ENCODE measurements at regions of chr15 and their contacts with region 1.

Region 1: DNA sequence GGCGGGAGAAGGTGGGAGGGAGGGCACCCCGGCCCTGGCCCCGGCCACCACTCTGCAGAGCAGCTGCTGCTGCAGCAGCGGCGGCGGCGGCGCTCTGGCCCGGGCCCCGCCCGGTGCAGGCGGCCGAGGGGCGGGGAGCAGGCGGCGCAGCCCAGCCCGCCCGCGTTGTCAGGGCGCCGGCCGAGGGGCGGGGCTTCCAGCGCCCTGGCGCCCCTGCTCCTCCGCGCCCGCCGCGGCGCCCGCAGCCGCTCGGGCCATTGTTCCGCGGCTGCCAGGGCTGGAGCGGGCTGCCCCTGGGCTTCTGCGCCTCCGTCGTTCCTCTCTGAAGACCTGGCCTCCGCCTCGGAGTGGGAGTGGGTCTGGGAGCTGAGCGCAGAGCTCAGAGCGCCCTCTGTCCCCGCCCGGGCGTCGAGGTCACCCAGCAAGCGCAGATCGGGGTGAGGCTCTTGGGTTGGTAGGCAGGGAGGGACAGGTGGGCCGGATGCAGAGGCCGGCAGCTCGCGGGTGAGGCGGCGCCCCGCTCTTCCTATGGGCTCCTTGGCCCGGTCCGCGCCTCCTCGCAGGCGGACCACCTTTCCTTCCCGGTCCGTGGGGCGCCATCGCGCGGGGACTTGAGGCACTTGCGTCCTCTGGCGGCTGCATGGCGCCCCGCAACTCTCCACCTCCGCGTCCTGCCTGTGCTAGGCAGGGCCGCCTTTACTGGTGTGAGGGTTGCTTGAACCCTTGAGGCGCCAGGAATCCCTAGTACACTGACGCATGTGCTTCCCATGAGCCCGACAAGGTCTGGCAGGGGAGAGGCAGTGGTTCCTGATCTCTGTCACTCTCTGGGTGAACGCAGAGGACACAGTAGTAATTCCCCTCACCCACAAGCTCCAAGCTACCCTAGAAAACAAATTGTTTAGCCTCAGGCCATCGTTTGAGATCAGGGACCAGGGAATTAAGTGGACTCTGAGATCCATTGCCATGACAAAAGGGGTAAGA is at the start of gene LPCAT4:
- DNase-seq: peak; percentile 95
- ATAC-seq: peak; percentile 90
- H3K4me3 Mint-ChIP-seq: peak within 1 kb of the TSS; percentile 95
- H3K27ac Mint-ChIP-seq: peak within 1 kb of the TSS; percentile 98
- H3K4me1 Mint-ChIP-seq: peaks cover 38% of the 10 kb centered on the region
- H3K27me3 Mint-ChIP-seq: no peaks in the 10 kb centered on the region
- total RNA-seq, gene LPCAT4: 106 to 115 TPM

Region 2: DNA sequence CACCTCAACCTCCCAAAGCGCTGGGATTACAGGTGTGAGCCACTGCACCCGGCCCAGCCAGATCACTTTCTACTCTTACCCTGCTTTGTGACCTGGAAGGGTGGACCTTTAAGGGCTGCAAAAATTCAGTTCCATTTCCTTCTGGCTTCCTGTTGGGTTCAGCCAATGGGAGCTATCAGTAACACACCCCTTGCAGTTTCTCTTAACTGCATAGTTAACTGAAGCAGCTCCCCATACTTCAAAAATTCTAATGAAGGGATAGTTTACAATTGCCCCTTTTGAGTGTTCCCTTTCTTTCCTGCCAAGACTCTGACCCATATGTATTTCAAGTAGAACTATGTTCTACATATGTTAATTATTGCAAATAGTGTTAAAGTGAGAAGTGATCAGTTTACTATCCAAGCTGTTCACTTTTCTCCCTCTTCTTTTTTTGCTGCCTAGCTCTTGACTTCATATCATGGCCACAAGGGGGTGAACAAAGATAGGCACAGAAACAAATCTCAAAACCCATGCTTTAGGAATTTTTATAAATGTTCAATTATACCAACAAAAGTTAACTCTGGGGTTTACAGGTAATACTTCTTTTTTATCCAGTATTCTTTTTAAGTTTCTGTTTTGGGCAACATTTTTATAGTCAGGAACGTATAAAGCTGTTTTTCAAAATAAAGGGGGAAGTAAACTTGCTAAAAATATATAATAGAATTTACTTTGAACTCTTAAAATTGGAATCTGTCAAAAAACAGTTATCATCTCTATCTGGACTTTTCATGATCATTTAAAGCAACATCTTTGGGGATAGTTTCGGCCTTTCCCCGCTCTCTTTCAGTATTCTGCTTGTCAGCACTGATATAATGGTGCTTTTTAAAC is 257.4 kb before region 1 on chr15:
- CTCF ChIA-PET with region 1: interaction called, 11 read pairs
- POLR2A ChIA-PET with region 1: no interaction called
- DNase-seq: no peak
- ATAC-seq: peak; percentile 51
- H3K4me3 Mint-ChIP-seq: no peak overlapping the region
- H3K27ac Mint-ChIP-seq: no peak overlapping the region
- H3K4me1 Mint-ChIP-seq: peaks cover 4% of the 10 kb centered on the region
- H3K27me3 Mint-ChIP-seq: peaks cover 5% of the 10 kb centered on the region

Region 3: DNA sequence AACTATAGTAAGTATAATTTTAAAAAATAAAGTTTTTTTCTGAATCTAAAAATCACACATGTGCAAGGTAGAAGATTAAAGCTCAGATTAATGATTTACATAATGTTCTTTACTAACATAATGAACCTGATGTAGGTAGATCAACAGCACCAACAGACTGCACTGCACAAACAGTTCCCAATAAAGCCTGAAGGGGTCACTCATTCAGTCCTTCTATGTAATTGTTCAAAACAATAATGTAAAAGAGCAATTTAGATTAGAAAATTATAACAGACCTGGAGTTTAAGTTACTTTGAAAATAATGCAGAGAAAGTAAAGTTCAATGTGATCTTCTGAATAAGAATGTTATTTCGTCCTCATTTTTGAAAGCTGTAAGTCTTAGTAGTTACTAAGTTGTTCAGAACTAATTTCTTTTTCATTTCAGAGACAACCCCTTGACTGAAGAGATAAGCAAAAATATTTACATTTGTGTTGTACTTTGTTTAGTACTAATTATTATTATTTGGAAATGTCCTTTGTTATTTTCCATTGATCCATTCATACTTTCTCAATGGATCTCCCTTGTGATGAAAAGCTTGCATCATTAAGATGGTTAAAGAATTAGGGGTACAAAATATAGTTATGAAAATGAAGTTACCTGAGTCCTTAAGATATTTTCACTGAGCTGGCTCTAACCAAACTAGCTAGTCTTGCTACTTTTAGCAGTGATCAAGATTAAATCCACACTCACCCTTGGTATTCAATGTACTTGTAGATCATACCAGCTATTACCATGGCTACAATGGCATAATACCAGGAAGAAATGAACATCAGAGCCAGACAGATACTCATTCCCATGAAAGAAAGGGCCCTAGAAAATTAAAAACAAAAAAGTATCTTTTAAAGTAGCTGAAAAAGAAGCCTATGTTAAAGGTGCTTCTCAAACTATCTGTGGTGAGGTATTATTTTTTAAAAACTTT is 125.7 kb before region 1 on chr15:
- CTCF ChIA-PET with region 1: interaction called, 93 read pairs
- POLR2A ChIA-PET with region 1: interaction called, 5 read pairs
- DNase-seq: peak; percentile 61
- ATAC-seq: peak; percentile 79
- H3K4me3 Mint-ChIP-seq: no peak overlapping the region
- H3K27ac Mint-ChIP-seq: no peak overlapping the region
- H3K4me1 Mint-ChIP-seq: peaks cover 18% of the 10 kb centered on the region
- H3K27me3 Mint-ChIP-seq: no peaks in the 10 kb centered on the region

Region 4: GRCh38 chr15:34271493-34271892 is 95.9 kb before region 1 on chr15:
- CTCF ChIA-PET with region 1: no interaction called
- POLR2A ChIA-PET with region 1: no interaction called
- DNase-seq: no peak
- ATAC-seq: no peak
- H3K4me3 Mint-ChIP-seq: no peak overlapping the region
- H3K27ac Mint-ChIP-seq: peak overlapping the region; percentile 22
- H3K4me1 Mint-ChIP-seq: no peaks in the 10 kb centered on the region
- H3K27me3 Mint-ChIP-seq: no peaks in the 10 kb centered on the region

Region 5: DNA sequence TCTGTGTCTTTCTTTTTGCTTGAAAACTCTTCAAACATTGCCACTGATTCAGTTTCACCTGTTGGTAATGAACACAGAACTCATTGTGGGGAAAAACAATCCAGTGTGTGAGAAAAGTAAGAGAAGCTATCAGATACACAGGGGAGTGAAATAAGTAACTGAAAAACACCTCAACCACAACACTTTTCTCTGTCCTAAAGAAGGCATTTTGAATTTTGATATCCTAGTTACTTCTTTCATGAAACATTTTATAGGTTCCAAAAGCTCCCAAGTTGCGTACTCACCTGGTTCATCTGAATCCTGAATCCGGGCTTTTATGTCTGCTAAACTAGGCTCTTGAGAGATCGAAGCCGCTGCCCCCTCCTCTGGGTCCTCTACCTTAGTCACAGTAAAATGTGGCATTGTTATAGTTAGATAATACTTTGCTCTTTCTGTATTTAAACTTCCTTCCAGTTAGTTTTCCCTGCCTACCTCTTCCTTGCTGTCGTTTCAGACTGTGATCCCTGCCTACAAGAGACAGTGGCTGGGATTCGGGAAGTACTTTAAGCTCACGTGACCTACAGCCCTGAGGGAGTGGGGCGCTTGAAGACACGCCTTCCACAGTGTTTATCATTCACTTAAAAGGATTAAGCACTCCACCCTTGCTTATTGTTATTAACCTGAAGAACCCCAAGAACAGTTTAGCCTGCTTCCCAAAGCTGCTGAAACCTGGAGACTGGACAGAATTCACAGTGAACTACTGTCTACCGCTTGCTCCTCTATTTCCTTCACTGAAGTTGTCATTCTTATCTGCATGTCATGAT is 48.9 kb before region 1 on chr15:
- CTCF ChIA-PET with region 1: interaction called, 12 read pairs
- POLR2A ChIA-PET with region 1: interaction called, 5 read pairs
- DNase-seq: peak; percentile 49
- ATAC-seq: peak; percentile 77
- H3K4me3 Mint-ChIP-seq: peak overlapping the region; percentile 81
- H3K27ac Mint-ChIP-seq: peak overlapping the region; percentile 79
- H3K4me1 Mint-ChIP-seq: peaks cover 43% of the 10 kb centered on the region
- H3K27me3 Mint-ChIP-seq: no peaks in the 10 kb centered on the region

Region 6: DNA sequence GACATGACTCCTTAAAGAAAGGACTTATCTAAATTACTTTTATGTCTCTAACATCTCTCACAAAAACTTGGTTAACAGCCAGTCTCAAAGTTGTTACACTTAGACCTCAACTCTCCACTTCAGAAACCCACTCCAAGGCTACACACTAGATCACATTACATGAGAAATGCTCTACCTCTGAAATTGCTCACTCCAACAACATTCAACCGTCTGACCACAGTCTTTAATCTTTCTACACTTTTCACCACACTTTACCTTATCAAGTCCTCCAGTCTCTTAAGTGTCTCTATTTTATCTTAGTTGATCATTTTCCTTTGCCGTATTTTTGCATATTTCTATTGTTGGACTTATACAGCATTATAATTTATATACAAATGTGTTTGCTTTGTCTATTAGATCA is 35.6 kb before region 1 on chr15:
- CTCF ChIA-PET with region 1: interaction called, 51 read pairs
- POLR2A ChIA-PET with region 1: interaction called, 33 read pairs
- DNase-seq: peak; percentile 33
- ATAC-seq: peak; percentile 68
- H3K4me3 Mint-ChIP-seq: peak overlapping the region; percentile 38
- H3K27ac Mint-ChIP-seq: peak overlapping the region; percentile 90
- H3K4me1 Mint-ChIP-seq: peaks cover 77% of the 10 kb centered on the region
- H3K27me3 Mint-ChIP-seq: no peaks in the 10 kb centered on the region

Region 7: GRCh38 chr15:34342737-34343575 is 24.4 kb before region 1 on chr15 and contains the starts of genes NOP10 and NUTM1:
- CTCF ChIA-PET with region 1: interaction called, 51 read pairs
- POLR2A ChIA-PET with region 1: interaction called, 33 read pairs
- DNase-seq: peak; percentile 96
- ATAC-seq: peak; percentile 87
- H3K4me3 Mint-ChIP-seq: no peak within 1 kb of the TSS
- H3K27ac Mint-ChIP-seq: peak within 1 kb of the TSS; percentile 81
- H3K4me1 Mint-ChIP-seq: peaks cover 23% of the 10 kb centered on the region
- H3K27me3 Mint-ChIP-seq: no peaks in the 10 kb centered on the region
- total RNA-seq, gene NOP10: 180 to 182 TPM
- total RNA-seq, gene NUTM1: not detected

Region 8: GRCh38 chr15:34496207-34496995 is 129.0 kb after region 1 on chr15:
- CTCF ChIA-PET with region 1: no interaction called
- POLR2A ChIA-PET with region 1: no interaction called
- DNase-seq: no peak
- ATAC-seq: peak; percentile 39
- H3K4me3 Mint-ChIP-seq: no peak overlapping the region
- H3K27ac Mint-ChIP-seq: no peak overlapping the region
- H3K4me1 Mint-ChIP-seq: peaks cover 11% of the 10 kb centered on the region
- H3K27me3 Mint-ChIP-seq: peaks cover 68% of the 10 kb centered on the region

Region 9: GRCh38 chr15:34587717-34588674 is 220.6 kb after region 1 on chr15:
- CTCF ChIA-PET with region 1: interaction called, 19 read pairs
- POLR2A ChIA-PET with region 1: interaction called, 9 read pairs
- DNase-seq: peak; percentile 79
- ATAC-seq: no peak
- H3K4me3 Mint-ChIP-seq: peak overlapping the region; percentile 73
- H3K27ac Mint-ChIP-seq: peak overlapping the region; percentile 22
- H3K4me1 Mint-ChIP-seq: peaks cover 24% of the 10 kb centered on the region
- H3K27me3 Mint-ChIP-seq: peaks cover 25% of the 10 kb centered on the region

Measured in activated CD8-positive, alpha-beta T cell treated with anti-CD3 and anti-CD28 coated beads, Interleukin-2, amount 10 ng/mL, durations not matched to agents 7 days and 5 days (primary cell).